Heart right ventricle (tissue), 16 donors: ENCODE measurements at regions of chr15 and their contacts with region 1.

Region 1: GRCh38 chr15:25176991-25177954 is 222.5 kb downstream of the SNRPN start:
- DNase-seq: peak; percentile 2
- ATAC-seq: no peak
- H3K4me3 ChIP-seq: no peak overlapping the region
- H3K27ac ChIP-seq: no peak overlapping the region
- H3K4me1 ChIP-seq: no peaks in the 10 kb centered on the region
- H3K27me3 ChIP-seq: no peaks in the 10 kb centered on the region
- CTCF ChIP-seq: no peak

Region 2: DNA sequence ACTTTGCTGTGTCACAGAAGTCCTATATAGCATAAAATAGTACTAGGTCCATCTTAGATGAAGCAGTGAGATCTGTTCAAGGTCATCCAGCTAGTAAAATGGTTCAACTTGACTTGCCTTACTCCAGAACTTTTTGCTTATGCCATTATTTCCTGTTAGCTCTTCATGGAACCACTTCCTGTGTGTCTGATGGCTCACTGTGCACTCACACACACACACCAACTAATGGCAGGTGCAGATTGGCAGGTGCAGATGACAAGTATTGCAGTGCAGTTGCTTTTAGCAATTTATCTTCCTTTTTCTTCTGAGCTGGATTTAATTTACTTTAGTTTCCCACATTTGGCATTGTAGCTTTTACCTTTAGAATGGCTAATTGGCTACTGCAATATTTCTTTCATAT is 1792.9 kb before region 1 on chr15:
- intact Hi-C with region 1: loop called in 1 of 10 experiments (anchors 10 kb)
- DNase-seq: no peak
- ATAC-seq: no peak
- H3K4me3 ChIP-seq: no peak overlapping the region
- H3K27ac ChIP-seq: no peak overlapping the region
- H3K4me1 ChIP-seq: no peaks in the 10 kb centered on the region
- H3K27me3 ChIP-seq: no peaks in the 10 kb centered on the region
- CTCF ChIP-seq: no peak

Region 3: GRCh38 chr15:25059698-25060471 is 117.4 kb before region 1 on chr15:
- intact Hi-C with region 1: no loop called
- DNase-seq: no peak
- ATAC-seq: no peak
- H3K4me3 ChIP-seq: no peak overlapping the region
- H3K27ac ChIP-seq: no peak overlapping the region
- H3K4me1 ChIP-seq: no peaks in the 10 kb centered on the region
- H3K27me3 ChIP-seq: no peaks in the 10 kb centered on the region
- CTCF ChIP-seq: no peak